Endothelial cell of umbilical vein (primary cell): ENCODE measurements at regions of chr21 and their contacts with region 1.

Region 1: DNA sequence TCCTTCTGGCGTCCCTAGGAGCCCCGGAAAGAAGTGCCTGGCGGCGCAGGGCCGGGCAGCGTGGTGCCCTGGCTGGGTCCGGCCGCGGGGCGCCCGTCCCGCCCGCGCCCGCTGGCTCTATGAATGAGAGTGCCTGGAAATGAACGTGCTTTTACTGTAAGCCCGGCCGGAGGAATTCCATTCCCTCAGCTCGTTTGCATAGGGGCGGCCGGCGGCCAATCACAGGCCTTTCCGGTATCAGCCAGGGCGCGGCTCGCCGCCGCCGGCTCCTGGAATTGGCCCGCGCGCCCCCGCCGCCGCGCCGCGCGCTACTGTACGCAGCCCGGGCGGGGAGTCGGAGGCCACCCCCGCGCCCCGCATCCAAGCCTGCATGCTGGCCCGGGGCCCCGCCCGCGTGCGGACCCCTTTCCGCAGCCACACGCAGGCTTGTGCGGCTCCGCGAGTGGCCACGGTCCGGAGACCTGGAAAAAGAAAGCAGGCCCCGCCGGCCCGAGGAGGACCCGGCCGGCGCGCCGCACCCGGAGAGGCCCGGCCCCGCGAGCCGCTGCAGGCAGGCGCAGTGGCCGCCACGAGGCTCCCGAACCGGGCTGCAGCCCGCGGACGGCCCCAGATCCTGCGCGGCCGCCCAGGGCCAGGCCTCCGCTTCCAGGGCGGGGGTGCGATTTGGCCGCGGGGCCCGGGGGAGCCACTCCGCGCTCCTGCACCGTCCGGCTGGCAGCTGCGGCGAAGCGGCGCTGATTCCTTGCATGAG is 160.4 kb downstream of the RUNX1 start:
- DNase-seq: peak; percentile 91
- H3K4me3 ChIP-seq: peak overlapping the region; percentile 59 to 89 (median 80)
- H3K27ac ChIP-seq: peak overlapping the region; percentile 88
- H3K4me1 ChIP-seq: peaks cover 36% of the 10 kb centered on the region
- H3K27me3 ChIP-seq: peaks cover 21 to 36% of the 10 kb centered on the region in 2 experiments
- CTCF ChIP-seq: no peak
- POLR2A ChIP-seq: peak; percentile 99

Region 2: DNA sequence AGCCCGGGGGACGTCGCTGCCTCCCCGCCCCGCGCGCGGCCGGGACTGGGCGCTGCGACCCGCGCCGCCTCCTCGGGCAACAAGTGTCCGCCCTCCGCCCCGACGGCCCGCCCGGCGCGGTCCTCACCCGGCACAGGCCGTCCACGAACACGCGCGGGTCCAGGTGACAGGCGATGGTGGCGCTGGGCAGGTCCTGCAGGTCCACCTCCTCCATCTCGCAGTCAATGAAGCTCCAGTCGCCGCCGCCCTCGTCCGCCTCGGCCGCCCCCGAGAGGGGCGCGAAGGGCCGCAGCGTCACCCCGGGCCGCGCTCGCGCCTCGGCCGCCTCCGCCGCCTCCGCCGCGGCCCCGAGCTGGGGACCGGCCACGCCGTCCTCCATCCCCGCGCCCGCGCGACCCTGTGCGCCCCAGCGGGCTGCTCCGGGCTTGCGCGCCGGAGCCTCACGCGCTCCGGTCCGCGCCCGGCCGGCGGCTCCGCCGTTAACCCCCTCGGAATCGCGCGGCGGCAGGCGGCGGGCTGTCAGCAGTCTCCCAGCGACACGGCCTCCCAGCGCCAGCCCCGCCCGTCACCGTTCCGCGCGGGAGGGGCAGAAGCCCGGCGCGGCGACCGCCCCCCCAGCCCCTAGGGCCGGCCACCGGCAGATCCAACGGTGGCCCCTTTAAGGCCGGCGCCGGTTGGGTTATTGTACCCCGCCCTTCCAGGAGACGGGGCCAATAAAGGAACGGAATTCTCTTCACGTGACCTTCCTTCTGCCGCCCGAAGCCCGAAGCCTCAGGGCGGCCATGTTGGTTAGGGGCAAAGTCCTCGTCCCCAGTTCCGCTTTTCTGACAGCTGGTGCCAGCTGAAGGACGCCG is 273.9 kb before region 1 on chr21 and contains the start of gene RCAN1:
- CTCF ChIA-PET with region 1: no interaction called
- POLR2A ChIA-PET with region 1: no interaction called
- dilution Hi-C with region 1: no loop called
- intact Hi-C with region 1: loop called (anchors 5 kb)
- DNase-seq: peak; percentile 92
- H3K4me3 ChIP-seq: peak within 1 kb of the TSS; percentile 69 to 83 (median 75)
- H3K27ac ChIP-seq: no peak within 1 kb of the TSS
- H3K4me1 ChIP-seq: peaks cover 4% of the 10 kb centered on the region
- H3K27me3 ChIP-seq: peaks cover 7 to 8% of the 10 kb centered on the region in 2 experiments
- CTCF ChIP-seq: no peak
- POLR2A ChIP-seq: no peak
- total RNA-seq, gene RCAN1: 15.9 and 16.5 TPM in 2 replicates

Region 3: GRCh38 chr21:34661848-34662247 is 226.9 kb before region 1 on chr21:
- CTCF ChIA-PET with region 1: no interaction called
- POLR2A ChIA-PET with region 1: no interaction called
- dilution Hi-C with region 1: no loop called
- intact Hi-C with region 1: no loop called
- DNase-seq: no peak
- H3K4me3 ChIP-seq: no peak overlapping the region
- H3K27ac ChIP-seq: no peak overlapping the region
- H3K4me1 ChIP-seq: no peaks in the 10 kb centered on the region
- H3K27me3 ChIP-seq: peaks cover 10 to 23% of the 10 kb centered on the region in 2 experiments
- CTCF ChIP-seq: no peak
- POLR2A ChIP-seq: no peak

Region 4: DNA sequence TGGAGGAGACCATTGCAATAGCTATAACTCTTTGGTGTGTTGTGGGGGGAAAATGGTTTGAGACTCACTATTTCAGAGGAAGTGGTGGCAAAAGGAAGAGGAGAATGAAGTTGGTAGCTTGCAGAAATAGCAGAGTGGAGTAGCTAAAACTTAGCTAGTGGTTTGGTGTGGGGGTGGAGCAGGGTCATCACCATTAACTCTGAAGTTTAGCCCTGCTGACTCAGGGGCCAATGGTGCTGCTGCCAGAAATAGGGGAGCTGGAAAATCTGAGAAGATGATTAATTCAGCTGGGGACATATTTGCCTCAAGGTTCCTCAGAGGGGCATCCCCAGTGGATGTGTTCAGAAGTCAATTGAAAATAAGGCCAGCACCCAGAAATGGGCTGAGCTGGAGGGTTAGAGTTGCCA is 94.9 kb after region 1 on chr21:
- CTCF ChIA-PET with region 1: no interaction called
- POLR2A ChIA-PET with region 1: interaction called, 3 read pairs
- dilution Hi-C with region 1: no loop called
- intact Hi-C with region 1: loop called (anchors 5 kb)
- DNase-seq: peak; percentile 40
- H3K4me3 ChIP-seq: no peak overlapping the region
- H3K27ac ChIP-seq: peak overlapping the region; percentile 90
- H3K4me1 ChIP-seq: peaks cover 19% of the 10 kb centered on the region
- H3K27me3 ChIP-seq: peaks cover 2 to 10% of the 10 kb centered on the region in 2 experiments
- CTCF ChIP-seq: no peak
- POLR2A ChIP-seq: no peak

Region 5: GRCh38 chr21:35256467-35256988 is 367.8 kb after region 1 on chr21:
- CTCF ChIA-PET with region 1: interaction called, 4 read pairs
- POLR2A ChIA-PET with region 1: no interaction called
- dilution Hi-C with region 1: no loop called
- intact Hi-C with region 1: loop called (anchors 1 kb)
- DNase-seq: peak; percentile 98
- H3K4me3 ChIP-seq: peak overlapping the region in 2 of 3 experiments; percentile 20 to 47
- H3K27ac ChIP-seq: peak overlapping the region; percentile 78
- H3K4me1 ChIP-seq: peaks cover 15% of the 10 kb centered on the region
- H3K27me3 ChIP-seq: no peaks in the 10 kb centered on the region
- CTCF ChIP-seq: no peak
- POLR2A ChIP-seq: no peak

Region 6: GRCh38 chr21:35475768-35476167 is 587.0 kb after region 1 on chr21:
- CTCF ChIA-PET with region 1: interaction called, 3 read pairs
- POLR2A ChIA-PET with region 1: no interaction called
- dilution Hi-C with region 1: no loop called
- intact Hi-C with region 1: loop called (anchors 2 kb)
- DNase-seq: peak; percentile 49
- H3K4me3 ChIP-seq: no peak overlapping the region
- H3K27ac ChIP-seq: peak overlapping the region; percentile 93
- H3K4me1 ChIP-seq: peaks cover 24% of the 10 kb centered on the region
- H3K27me3 ChIP-seq: no peaks in the 10 kb centered on the region
- CTCF ChIP-seq: no peak
- POLR2A ChIP-seq: no peak

Region 7: GRCh38 chr21:35649186-35649585 is 760.4 kb after region 1 on chr21:
- CTCF ChIA-PET with region 1: no interaction called
- POLR2A ChIA-PET with region 1: no interaction called
- dilution Hi-C with region 1: no loop called
- intact Hi-C with region 1: loop called (anchors 10 kb)
- DNase-seq: peak; percentile 19
- H3K4me3 ChIP-seq: no peak overlapping the region
- H3K27ac ChIP-seq: no peak overlapping the region
- H3K4me1 ChIP-seq: peaks cover 10% of the 10 kb centered on the region
- H3K27me3 ChIP-seq: peaks cover 2 to 6% of the 10 kb centered on the region in 2 experiments
- CTCF ChIP-seq: no peak
- POLR2A ChIP-seq: no peak

Region 8: DNA sequence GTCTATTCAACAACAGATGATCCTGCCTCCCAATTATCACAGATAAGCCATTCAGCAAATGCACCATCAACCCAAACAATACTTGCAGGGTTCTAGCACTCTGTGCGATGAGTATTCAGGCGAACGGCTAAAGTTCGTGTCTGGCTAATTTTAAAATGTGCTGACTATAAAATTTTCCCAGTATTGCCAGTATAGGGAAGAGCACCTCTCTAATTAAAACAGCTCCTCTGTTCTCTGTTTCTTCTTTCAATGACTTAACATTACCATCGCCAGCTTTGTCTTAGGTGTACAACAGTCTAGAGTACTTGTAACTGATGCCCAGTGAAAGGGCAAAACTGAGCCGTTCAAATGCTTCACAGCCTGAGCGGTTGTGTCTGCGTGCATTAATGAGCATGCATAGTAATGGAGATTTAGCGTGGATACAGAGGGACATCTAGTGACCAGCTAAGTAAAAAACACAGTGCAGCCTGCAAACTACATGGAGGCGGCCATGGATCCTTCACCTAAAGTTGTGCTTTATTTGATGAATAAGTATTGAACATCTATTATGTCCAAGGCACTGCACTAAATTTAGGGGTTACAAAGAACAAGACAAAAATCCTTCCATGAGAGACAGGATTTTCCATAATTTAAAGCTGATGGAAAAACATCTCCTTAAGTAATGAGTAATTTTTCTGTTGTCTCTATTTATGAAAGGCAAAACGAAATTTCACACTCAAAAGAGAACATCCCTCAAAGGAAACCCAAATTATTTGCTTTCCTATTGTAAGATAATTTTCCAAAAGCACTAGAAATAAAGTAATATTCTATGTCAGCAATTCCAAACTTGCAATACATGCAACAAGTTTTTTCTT is 1051.6 kb after region 1 on chr21:
- CTCF ChIA-PET with region 1: interaction called, 9 read pairs
- POLR2A ChIA-PET with region 1: no interaction called
- dilution Hi-C with region 1: no loop called
- intact Hi-C with region 1: loop called (anchors 1 kb)
- DNase-seq: peak; percentile 76
- H3K4me3 ChIP-seq: no peak overlapping the region
- H3K27ac ChIP-seq: no peak overlapping the region
- H3K4me1 ChIP-seq: no peaks in the 10 kb centered on the region
- H3K27me3 ChIP-seq: no peaks in the 10 kb centered on the region
- CTCF ChIP-seq: peak; percentile 57 to 64
- POLR2A ChIP-seq: no peak